ENCODE measurements at regions of chr11 and their contacts with region 1.

Region 1: DNA sequence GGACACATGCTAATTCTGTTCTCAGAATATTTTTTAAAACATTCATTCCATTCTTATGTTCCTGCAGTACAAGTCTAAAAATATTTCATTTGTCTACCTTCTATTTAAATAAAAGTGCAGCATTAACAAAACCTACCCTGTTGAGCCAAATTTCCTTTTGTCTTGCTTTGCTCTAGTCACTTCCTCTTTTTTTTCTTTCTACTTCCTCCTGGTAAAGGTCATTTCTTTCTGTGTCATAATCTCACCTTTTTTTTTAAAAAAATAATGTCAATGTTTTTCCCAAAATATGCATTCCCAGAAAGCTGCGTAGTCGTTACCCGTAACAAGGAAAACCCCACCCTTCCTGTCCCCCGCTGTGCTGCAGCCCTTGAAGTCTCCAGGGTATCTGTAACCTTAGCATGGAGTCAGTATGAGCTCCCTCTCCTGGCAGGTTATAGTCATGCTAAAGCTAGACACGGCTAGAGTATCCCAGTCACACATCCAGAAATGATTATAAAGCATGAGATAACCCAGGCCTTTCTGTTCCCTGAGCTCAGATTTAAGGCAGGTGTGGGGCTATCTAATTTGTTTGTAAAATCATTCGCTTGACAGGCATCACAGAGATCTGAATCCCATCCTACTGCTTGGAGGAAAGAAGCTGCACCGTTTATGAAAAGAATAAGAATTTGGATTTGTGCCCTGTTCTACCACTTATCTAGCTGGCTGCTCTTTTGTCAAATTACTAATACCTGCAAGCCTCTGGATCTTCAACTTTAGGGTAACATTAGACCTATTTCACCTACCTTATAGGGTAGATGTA is 51.1 kb upstream of the EED start:
- DNase-seq: peak; percentile 83
- ATAC-seq: peak; percentile 100
- H3K4me3 Mint-ChIP-seq: peak overlapping the region; percentile 75
- H3K27ac Mint-ChIP-seq: peak overlapping the region; percentile 40
- H3K4me1 Mint-ChIP-seq: peaks cover 18% of the 10 kb centered on the region
- H3K27me3 Mint-ChIP-seq: peaks cover 9% of the 10 kb centered on the region

Region 2: DNA sequence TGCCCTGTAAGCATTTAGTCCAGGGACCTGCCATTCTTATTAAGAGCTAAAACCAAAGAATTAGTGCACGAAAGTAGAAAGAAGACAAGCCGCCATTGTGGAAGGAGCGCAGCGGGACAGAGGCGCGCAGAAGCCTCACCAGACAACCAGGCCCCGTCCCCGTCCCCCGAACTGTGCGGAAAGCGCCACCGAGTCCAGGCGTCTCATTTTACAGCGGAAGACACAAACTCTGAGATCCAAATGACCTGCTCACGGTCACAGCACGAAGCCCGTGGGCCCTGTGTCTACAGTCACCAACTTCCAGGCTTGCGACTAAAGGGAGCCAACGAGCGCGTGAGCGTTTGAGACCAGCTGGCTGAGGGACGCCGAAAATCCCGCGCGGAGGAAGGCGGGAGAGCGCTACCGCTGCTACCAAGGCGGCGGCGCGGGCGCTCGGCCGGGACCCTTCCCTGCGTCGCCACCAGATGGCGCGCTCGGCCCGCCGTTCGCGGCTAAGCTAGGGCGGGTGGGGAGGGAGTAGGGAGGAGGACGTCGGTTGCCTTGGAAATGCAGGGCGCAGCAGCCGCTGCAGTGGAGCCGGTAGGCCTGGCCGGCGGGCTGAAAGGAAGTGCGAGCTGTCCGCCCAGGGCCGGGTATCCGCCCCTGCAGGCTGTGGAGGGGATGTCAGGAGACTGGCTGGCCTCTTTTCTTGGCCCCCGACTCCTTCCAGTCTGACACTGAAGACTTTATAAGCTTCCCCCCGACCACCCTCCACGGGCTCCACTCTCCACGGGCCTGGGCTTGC is 338.7 kb before region 1 on chr11:
- CTCF ChIA-PET with region 1: interaction called, 14 read pairs
- POLR2A ChIA-PET with region 1: no interaction called
- DNase-seq: peak; percentile 93
- ATAC-seq: peak; percentile 96
- H3K4me3 Mint-ChIP-seq: peak overlapping the region; percentile 84
- H3K27ac Mint-ChIP-seq: peak overlapping the region; percentile 91
- H3K4me1 Mint-ChIP-seq: peaks cover 13% of the 10 kb centered on the region
- H3K27me3 Mint-ChIP-seq: peaks cover 7% of the 10 kb centered on the region

Region 3: DNA sequence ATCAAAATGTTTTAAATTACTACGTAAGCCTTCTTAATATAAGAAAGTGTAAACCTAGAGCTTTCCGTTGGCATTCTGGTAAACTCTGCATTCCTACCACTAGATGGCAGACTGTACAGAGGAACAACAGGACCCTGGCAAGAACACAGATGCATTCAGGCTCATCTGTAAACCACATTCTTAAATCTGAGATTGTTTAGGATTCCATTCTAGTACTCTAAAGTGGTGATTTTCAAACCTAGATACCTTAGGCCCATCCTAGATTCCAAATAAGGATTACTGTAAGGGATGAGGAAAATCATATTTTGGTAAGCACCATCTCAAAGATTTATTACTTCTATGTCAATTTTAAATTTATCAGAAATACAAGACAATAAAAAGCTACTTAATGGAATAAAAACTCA is 151.5 kb before region 1 on chr11:
- CTCF ChIA-PET with region 1: interaction called, 137 read pairs
- POLR2A ChIA-PET with region 1: interaction called, 4 read pairs
- DNase-seq: peak; percentile 68
- ATAC-seq: peak; percentile 84
- H3K4me3 Mint-ChIP-seq: no peak overlapping the region
- H3K27ac Mint-ChIP-seq: no peak overlapping the region
- H3K4me1 Mint-ChIP-seq: peaks cover 52% of the 10 kb centered on the region
- H3K27me3 Mint-ChIP-seq: no peaks in the 10 kb centered on the region

Region 4: DNA sequence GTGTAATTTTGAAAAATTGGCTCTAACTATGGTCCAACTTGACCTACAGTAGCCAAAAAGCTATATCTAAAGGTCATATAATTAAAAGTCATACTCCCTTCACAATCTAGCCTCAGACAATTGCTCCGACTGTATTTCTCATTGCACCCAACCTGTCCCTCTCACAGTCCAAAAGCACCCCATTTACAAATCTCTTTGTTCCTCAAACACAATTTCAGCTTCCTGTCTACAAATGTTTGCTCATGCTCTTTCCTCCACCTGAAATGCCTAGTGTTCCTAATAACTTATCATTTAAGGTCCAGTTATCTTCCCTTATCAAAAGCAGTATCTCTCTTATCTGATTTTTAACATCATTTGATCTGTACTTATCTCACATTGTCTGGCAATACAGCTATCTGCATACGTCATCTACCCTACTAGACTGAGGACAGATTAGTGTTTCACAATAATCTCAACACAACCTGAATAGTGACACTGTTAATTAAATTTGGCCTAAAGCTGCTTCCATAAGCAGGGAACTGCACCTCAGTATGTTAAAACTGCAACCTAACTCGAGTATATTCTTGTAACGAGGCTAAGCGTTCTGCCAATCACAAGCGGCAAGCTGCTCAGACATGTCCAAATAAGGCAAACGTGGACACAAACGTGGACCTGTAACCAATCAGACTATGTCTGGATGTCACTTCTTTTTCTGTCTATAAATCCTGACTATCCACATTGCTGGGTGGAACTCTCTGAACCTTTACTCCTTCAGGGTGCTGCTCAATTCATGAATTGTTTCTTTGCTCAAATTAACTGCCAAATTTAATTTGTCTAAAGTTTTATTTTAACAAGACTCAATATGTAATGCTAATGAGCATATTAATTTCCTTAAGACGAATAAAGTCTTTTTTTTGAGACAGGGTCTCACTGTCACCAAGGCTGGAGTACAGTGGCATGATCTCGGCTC is 140.5 kb before region 1 on chr11:
- CTCF ChIA-PET with region 1: interaction called, 21 read pairs
- POLR2A ChIA-PET with region 1: no interaction called
- DNase-seq: no peak
- ATAC-seq: no peak
- H3K4me3 Mint-ChIP-seq: no peak overlapping the region
- H3K27ac Mint-ChIP-seq: no peak overlapping the region
- H3K4me1 Mint-ChIP-seq: peaks cover 62% of the 10 kb centered on the region
- H3K27me3 Mint-ChIP-seq: no peaks in the 10 kb centered on the region

Region 5: GRCh38 chr11:86116386-86116726 is 77.1 kb before region 1 on chr11:
- CTCF ChIA-PET with region 1: interaction called, 27 read pairs
- POLR2A ChIA-PET with region 1: no interaction called
- DNase-seq: no peak
- ATAC-seq: peak; percentile 76
- H3K4me3 Mint-ChIP-seq: no peak overlapping the region
- H3K27ac Mint-ChIP-seq: no peak overlapping the region
- H3K4me1 Mint-ChIP-seq: peaks cover 19% of the 10 kb centered on the region
- H3K27me3 Mint-ChIP-seq: peaks cover 2% of the 10 kb centered on the region

Region 6: GRCh38 chr11:86143087-86144030 is 50.1 kb before region 1 on chr11:
- CTCF ChIA-PET with region 1: interaction called, 11 read pairs
- POLR2A ChIA-PET with region 1: interaction called, 3 read pairs
- DNase-seq: peak; percentile 59
- ATAC-seq: peak; percentile 44
- H3K4me3 Mint-ChIP-seq: peak overlapping the region; percentile 16
- H3K27ac Mint-ChIP-seq: peak overlapping the region; percentile 85
- H3K4me1 Mint-ChIP-seq: peaks cover 72% of the 10 kb centered on the region
- H3K27me3 Mint-ChIP-seq: peaks cover 3% of the 10 kb centered on the region

Region 7: GRCh38 chr11:86182976-86183584 is 10.4 kb before region 1 on chr11:
- CTCF ChIA-PET with region 1: interaction called, 29 read pairs
- POLR2A ChIA-PET with region 1: no interaction called
- DNase-seq: peak; percentile 60
- ATAC-seq: peak; percentile 68
- H3K4me3 Mint-ChIP-seq: no peak overlapping the region
- H3K27ac Mint-ChIP-seq: no peak overlapping the region
- H3K4me1 Mint-ChIP-seq: peaks cover 11% of the 10 kb centered on the region
- H3K27me3 Mint-ChIP-seq: no peaks in the 10 kb centered on the region

Region 8: DNA sequence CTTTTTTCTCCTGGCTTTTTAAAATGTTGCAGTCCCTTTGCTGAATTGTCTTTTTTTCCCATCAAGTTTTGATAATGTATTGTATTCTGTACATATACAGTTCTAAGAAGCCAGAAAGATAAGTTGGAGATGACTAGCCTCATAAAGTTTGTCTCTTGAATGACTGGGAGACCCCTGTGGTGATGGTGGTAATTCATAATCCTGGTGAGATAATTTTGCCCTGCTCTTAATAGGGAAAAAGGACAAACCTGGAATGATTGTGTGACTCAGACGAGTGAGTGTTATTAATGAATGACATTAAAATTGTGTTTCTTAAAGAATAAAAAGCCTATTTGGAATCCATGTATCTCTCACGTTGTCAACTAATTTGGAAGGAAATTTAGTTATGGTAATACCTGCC is 109.8 kb after region 1 on chr11:
- CTCF ChIA-PET with region 1: no interaction called
- POLR2A ChIA-PET with region 1: no interaction called
- DNase-seq: no peak
- ATAC-seq: no peak
- H3K4me3 Mint-ChIP-seq: peak overlapping the region; percentile 99
- H3K27ac Mint-ChIP-seq: no peak overlapping the region
- H3K4me1 Mint-ChIP-seq: peaks cover 26% of the 10 kb centered on the region
- H3K27me3 Mint-ChIP-seq: no peaks in the 10 kb centered on the region

Region 9: GRCh38 chr11:86386746-86387145 is 193.2 kb after region 1 on chr11:
- CTCF ChIA-PET with region 1: no interaction called
- POLR2A ChIA-PET with region 1: no interaction called
- DNase-seq: no peak
- ATAC-seq: no peak
- H3K4me3 Mint-ChIP-seq: no peak overlapping the region
- H3K27ac Mint-ChIP-seq: no peak overlapping the region
- H3K4me1 Mint-ChIP-seq: no peaks in the 10 kb centered on the region
- H3K27me3 Mint-ChIP-seq: no peaks in the 10 kb centered on the region